Activated CD4-positive, alpha-beta T cell treated with anti-CD3 and anti-CD28 coated beads, Interleukin-2, amount 10 ng/mL, durations not matched to agents 24 days and 14 days (primary cell): ENCODE measurements at regions of chr7 and their contacts with region 1.

Region 1: GRCh38 chr7:47291461-47292081 is 290.3 kb downstream of the TNS3 start:
- DNase-seq: peak; percentile 65
- H3K4me3 Mint-ChIP-seq: peak overlapping the region; percentile 36
- H3K27ac Mint-ChIP-seq: peak overlapping the region; percentile 86
- H3K4me1 Mint-ChIP-seq: peaks cover 17% of the 10 kb centered on the region
- H3K27me3 Mint-ChIP-seq: no peaks in the 10 kb centered on the region

Region 2: GRCh38 chr7:47310020-47310419 is 18.4 kb after region 1 on chr7:
- intact Hi-C with region 1: loop called (anchors 1 kb)
- DNase-seq: no peak
- H3K4me3 Mint-ChIP-seq: no peak overlapping the region
- H3K27ac Mint-ChIP-seq: peak overlapping the region; percentile 37
- H3K4me1 Mint-ChIP-seq: peaks cover 13% of the 10 kb centered on the region
- H3K27me3 Mint-ChIP-seq: no peaks in the 10 kb centered on the region

Region 3: GRCh38 chr7:47326220-47326619 is 34.6 kb after region 1 on chr7:
- intact Hi-C with region 1: loop called (anchors 1 kb)
- DNase-seq: no peak
- H3K4me3 Mint-ChIP-seq: no peak overlapping the region
- H3K27ac Mint-ChIP-seq: no peak overlapping the region
- H3K4me1 Mint-ChIP-seq: peaks cover 4% of the 10 kb centered on the region
- H3K27me3 Mint-ChIP-seq: no peaks in the 10 kb centered on the region